ENCODE measurements at regions of chr7 and their contacts with region 1.

Region 1: DNA sequence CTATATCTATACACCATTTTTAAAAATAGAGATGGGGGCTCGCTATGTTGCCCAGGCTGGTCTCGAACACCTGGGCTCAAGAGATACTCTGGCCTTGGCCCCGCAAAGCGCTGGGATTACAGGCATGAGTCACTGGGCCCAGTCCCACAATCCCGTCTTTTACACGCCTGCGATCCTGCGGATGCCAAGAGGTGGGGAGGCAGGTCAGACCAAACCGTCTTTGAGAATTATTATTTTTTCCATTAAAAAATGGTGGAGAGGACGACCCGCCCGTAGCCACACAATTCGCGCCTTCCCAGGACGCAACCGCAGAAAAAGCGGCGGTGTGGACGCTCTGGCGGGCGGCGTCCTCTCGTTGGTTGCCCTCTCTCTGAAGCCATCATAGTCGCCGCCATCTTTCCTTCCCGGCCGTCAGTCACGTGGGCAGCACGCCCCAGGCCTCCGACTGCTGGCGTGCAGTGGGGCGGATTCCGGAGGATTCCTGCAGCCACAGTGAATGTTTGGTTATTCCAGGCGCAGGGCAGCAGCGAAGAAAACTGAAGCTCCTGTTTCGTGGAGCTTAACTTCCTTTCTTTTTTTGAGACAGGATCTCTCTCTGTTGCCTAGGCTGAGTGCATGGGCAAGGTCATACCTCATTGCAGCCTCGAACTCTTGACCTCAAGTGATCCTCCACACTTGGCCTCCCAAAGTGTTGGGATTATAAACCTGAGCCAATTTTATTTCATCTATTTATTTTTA is 9.9 kb upstream of the EPHB4 start:
- DNase-seq: peak; percentile 84 to 96 (median 92)
- ATAC-seq: peak; percentile 94
- H3K4me3 ChIP-seq: peak overlapping the region; percentile 24 to 48
- H3K27ac ChIP-seq: peak overlapping the region; percentile 83 to 84
- H3K4me1 ChIP-seq: peaks cover 6 to 19% of the 10 kb centered on the region in 2 donors
- H3K27me3 ChIP-seq: no peaks in the 10 kb centered on the region
- CTCF ChIP-seq: no peak

Region 2: DNA sequence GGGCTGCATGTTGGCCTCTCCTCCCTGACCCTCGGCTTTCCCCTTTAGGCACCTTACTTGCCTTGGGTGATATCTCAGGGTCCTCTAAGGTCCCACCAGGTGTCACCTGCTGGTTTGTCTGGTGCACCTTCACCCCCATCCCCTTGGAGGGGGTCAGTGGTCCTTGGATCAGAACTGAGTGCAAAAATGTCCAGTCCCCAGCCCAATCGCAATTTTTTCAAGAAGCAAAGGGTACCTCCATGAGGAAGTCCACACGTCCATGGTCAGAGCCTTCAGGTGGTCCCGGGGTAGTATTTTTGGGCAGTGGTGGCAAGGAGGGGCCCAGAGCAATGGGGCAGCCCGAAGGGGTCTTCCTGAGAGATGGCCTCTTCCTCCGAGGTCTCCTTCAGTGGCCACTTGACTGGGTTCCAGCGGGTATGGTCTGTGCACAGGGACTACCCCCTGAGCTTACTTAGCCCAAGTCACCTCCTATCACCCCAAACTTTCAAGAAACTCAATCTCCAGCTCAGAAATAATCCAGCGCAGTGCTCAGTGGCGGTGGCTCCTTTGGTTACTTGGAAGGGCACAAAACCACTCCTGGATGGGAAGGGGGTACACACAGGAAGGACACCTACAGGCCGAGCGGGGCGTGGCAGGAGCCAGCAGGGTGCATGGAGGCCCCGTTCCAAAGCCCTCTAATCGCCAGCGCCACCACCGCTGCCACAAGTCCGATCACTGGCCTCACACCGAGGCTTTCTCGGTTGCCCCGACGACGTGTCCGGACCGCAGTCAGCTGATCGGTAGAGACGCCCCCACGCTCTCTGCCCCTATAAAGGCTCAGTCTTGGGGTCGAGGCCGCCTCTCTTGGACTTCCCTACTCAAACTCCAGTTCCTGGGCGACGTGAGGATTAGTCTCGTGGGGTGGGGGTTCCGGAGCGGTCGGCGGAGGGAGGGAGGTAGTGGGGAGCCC is 268.1 kb before region 1 on chr7:
- intact Hi-C with region 1: no loop called
- DNase-seq: peak in 3 of 4 donors; percentile 61 to 84 (median 62)
- ATAC-seq: peak; percentile 62
- H3K4me3 ChIP-seq: peak overlapping the region; percentile 10 to 16
- H3K27ac ChIP-seq: no peak overlapping the region
- H3K4me1 ChIP-seq: peaks cover 12 to 34% of the 10 kb centered on the region in 2 donors
- H3K27me3 ChIP-seq: peaks cover 0 to 15% of the 10 kb centered on the region in 2 donors
- CTCF ChIP-seq: peak; percentile 15 to 41

Region 3: GRCh38 chr7:100803398-100804233 is 33.7 kb before region 1 on chr7:
- intact Hi-C with region 1: loop called in 1 of 2 experiments (anchors 5 kb)
- DNase-seq: peak; percentile 71 to 89 (median 82)
- ATAC-seq: peak; percentile 87
- H3K4me3 ChIP-seq: no peak overlapping the region
- H3K27ac ChIP-seq: peak overlapping the region; percentile 50 to 65
- H3K4me1 ChIP-seq: peaks cover 24 to 51% of the 10 kb centered on the region in 2 donors
- H3K27me3 ChIP-seq: no peaks in the 10 kb centered on the region
- CTCF ChIP-seq: no peak

Measured in left lung (tissue), 14 donors.